ENCODE measurements at regions of chr1 and their contacts with region 1.

Region 1: DNA sequence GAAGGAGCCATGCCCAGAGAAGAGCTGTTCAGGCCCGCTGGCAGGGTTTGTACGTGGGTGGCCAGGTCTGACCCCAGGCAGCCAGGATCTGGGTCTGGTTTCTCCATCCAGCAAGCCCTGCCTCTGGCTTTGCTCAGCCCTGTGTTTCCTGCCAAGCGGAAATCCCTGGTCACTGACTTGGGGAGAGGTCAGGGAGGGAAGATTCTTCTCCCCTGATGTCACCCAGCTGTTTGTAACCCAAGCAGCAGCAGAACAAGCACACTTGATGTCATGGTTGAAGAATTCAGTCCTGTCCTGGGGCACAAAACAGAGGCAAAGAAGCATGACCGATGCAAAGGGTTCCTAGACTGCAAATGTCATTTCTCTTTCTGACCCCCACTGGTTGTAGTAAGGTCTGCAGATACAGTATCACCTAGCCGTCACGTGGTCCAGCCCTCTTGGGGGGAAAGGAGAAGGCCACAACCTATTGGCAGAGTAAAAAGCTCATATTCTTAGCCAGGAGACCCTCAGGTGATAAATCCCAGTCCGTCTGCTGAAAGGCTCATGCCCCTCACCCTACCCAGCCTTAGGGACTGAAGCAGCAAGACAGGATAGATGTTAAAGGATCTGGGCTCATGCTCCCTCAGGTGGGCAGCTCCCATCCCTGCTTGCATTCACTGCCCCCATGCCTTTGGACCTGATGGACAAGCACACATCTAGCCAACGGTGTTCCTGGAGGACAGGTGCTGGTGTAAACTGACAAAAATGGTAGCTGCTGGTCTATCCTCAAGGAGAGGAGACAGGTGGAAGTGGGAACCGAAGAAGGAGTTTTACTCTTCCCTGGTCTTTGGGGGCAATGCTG is 120.8 kb downstream of the SYT2 start:
- DNase-seq: peak; percentile 70 to 98
- H3K4me3 ChIP-seq: no peak overlapping the region
- H3K27ac ChIP-seq: peak overlapping the region; percentile 90 to 94
- H3K4me1 ChIP-seq: peaks cover 8 to 55% of the 10 kb centered on the region in 2 donors
- H3K27me3 ChIP-seq: no peaks in the 10 kb centered on the region
- CTCF ChIP-seq: peak in 1 of 3 experiments; percentile 11

Region 2: GRCh38 chr1:202207292-202207691 is 382.1 kb before region 1 on chr1:
- intact Hi-C with region 1: loop called (anchors 10 kb)
- DNase-seq: peak in 1 of 2 donors; percentile 80
- H3K4me3 ChIP-seq: no peak overlapping the region
- H3K27ac ChIP-seq: peak overlapping the region; percentile 50 to 65
- H3K4me1 ChIP-seq: peaks cover 11 to 29% of the 10 kb centered on the region in 2 donors
- H3K27me3 ChIP-seq: no peaks in the 10 kb centered on the region
- CTCF ChIP-seq: peak in 2 of 3 experiments; percentile 23 to 42

Region 3: GRCh38 chr1:202501281-202501680 is 88.1 kb before region 1 on chr1:
- intact Hi-C with region 1: loop called (anchors 5 kb)
- DNase-seq: no peak
- H3K4me3 ChIP-seq: no peak overlapping the region
- H3K27ac ChIP-seq: peak overlapping the region in 1 of 2 donors; percentile 45
- H3K4me1 ChIP-seq: peaks cover 0 to 23% of the 10 kb centered on the region in 2 donors
- H3K27me3 ChIP-seq: no peaks in the 10 kb centered on the region
- CTCF ChIP-seq: peak; percentile 35 to 62 (median 59)

Region 4: DNA sequence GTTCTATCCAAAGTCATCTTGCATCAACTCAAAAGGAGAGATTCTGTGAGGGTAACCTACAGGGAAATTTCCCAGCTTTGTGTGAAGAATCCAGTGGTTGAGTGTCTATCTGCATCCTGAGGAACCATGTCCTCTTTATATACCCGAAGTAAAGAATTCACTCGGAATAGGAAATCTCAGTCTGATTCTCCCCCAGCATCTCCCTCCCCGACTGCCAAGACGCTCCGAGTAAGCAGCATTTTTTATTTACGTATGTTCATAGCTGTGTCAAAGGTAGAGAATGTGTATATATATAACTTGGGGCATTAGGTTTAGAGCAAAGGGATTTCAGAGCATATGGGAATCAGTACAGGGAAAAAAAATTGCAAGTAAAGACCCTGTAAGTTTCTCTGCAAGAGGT is 49.4 kb before region 1 on chr1:
- intact Hi-C with region 1: loop called (anchors 2 kb)
- DNase-seq: no peak
- H3K4me3 ChIP-seq: peak overlapping the region; percentile 68 to 77
- H3K27ac ChIP-seq: peak overlapping the region; percentile 92 to 95
- H3K4me1 ChIP-seq: peaks cover 0 to 14% of the 10 kb centered on the region in 2 donors
- H3K27me3 ChIP-seq: no peaks in the 10 kb centered on the region
- CTCF ChIP-seq: no peak

Region 5: DNA sequence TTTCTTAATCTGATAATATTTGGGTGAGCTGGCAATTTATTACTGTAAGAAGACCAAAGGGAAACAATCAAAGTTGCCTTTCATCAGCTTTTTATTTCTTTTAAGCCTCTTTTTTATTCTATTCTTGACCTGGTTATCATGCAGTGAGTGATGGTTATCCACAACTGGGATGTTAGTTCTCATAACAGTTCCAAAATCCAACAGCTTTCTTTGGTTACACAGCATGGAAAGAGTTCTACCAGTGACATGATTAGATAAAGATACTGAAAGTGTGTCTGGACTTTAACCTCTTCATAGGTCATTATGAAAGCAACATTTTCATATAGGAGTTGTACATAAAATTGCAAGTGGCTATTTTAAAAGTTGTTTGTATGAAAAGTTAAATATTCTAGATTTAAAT is 42.2 kb before region 1 on chr1:
- intact Hi-C with region 1: loop called (anchors 2 kb)
- DNase-seq: no peak
- H3K4me3 ChIP-seq: peak overlapping the region; percentile 27 to 77
- H3K27ac ChIP-seq: peak overlapping the region; percentile 92 to 95
- H3K4me1 ChIP-seq: peaks cover 3 to 25% of the 10 kb centered on the region in 2 donors
- H3K27me3 ChIP-seq: no peaks in the 10 kb centered on the region
- CTCF ChIP-seq: no peak

Region 6: GRCh38 chr1:202571347-202572339 is 17.8 kb before region 1 on chr1:
- intact Hi-C with region 1: loop called (anchors 2 kb)
- DNase-seq: no peak
- H3K4me3 ChIP-seq: no peak overlapping the region
- H3K27ac ChIP-seq: peak overlapping the region; percentile 70 to 79
- H3K4me1 ChIP-seq: peaks cover 12 to 75% of the 10 kb centered on the region in 2 donors
- H3K27me3 ChIP-seq: no peaks in the 10 kb centered on the region
- CTCF ChIP-seq: peak; percentile 61 to 73 (median 66)

Measured in ascending aorta (tissue), 2 donors.